ENCODE measurements at regions of chr5 and their contacts with region 1.

Region 1: DNA sequence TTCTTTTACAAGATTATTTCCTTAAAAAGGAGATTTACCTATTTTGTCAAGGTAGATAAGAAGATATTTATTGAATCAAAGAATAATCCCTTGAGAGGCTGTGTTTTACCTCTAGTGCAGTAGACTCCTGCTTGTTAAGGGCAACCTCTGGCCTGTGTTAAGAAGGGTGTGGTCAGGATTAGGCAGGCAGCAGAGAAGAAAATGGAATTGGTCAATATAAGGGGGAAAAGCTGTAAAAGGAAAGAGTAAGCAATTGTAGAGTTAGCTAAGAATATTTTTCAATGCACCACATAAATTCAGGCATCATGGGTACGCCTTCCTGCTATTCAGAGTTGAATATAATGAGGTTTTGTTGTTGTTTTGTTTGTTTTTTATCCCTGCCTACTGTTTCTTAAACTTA is 6.2 kb downstream of the CCDC125 start:
- DNase-seq: no peak
- ATAC-seq: no peak
- H3K4me3 Mint-ChIP-seq: no peak overlapping the region
- H3K27ac Mint-ChIP-seq: peak overlapping the region in 2 of 10 donors; percentile 53 to 69
- H3K4me1 Mint-ChIP-seq: peaks cover 0 to 5% (median 2%) of the 10 kb centered on the region in 4 donors
- H3K27me3 Mint-ChIP-seq: no peaks in the 10 kb centered on the region

Region 2: DNA sequence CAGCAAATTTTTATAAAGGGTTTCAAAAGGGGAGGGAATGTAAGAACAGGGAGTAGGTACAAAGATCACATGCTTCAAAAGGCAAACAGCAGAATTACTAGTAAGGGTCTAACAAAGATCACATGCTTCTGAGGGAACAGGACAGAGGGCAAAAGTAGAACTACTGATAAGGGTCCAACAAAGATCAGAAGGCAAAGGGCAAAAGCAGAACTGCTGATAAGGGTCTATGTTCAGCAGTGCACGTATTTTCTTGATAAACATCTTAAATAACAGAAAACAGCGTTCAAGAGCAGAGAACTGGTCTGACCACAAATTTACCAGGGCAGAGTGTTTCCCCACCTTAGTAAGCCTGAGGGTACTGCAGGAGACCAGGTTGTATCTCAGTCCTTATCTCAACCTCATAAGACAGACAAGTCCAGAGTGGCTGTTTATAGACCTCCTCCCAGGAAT is 1580.2 kb before region 1 on chr5:
- POLR2A ChIA-PET with region 1: no interaction called
- DNase-seq: no peak
- ATAC-seq: no peak
- H3K4me3 Mint-ChIP-seq: no peak overlapping the region
- H3K27ac Mint-ChIP-seq: no peak overlapping the region
- H3K4me1 Mint-ChIP-seq: no peaks in the 10 kb centered on the region
- H3K27me3 Mint-ChIP-seq: no peaks in the 10 kb centered on the region

Region 3: DNA sequence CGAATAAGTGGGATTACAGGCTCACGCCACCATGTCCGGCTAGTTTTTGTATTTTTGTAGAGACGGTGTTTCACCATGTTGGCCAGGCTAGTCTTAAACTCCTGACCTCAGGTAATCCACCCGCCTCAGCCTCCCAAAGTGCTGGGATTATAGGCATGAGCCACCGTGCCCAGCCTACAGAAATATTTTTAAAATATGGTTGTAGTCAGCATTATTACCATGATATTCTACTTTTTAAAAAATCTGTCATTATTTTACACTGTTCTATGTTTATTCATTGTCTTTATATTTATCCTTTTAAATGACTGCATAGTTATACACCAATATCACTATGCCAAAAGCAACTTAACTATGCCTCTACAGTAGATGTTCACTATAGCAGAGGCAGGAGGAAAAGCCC is 274.2 kb before region 1 on chr5:
- POLR2A ChIA-PET with region 1: no interaction called
- DNase-seq: no peak
- ATAC-seq: no peak
- H3K4me3 Mint-ChIP-seq: no peak overlapping the region
- H3K27ac Mint-ChIP-seq: no peak overlapping the region
- H3K4me1 Mint-ChIP-seq: no peaks in the 10 kb centered on the region
- H3K27me3 Mint-ChIP-seq: peaks cover 0 to 2% (median 0%) of the 10 kb centered on the region in 5 donors

Region 4: GRCh38 chr5:69364850-69365249 is 38.5 kb after region 1 on chr5:
- POLR2A ChIA-PET with region 1: interaction called, 10 read pairs
- DNase-seq: no peak
- ATAC-seq: no peak
- H3K4me3 Mint-ChIP-seq: no peak overlapping the region
- H3K27ac Mint-ChIP-seq: peak overlapping the region in 2 of 10 donors; percentile 63 to 66
- H3K4me1 Mint-ChIP-seq: peaks cover 19 to 46% (median 34%) of the 10 kb centered on the region in 4 donors
- H3K27me3 Mint-ChIP-seq: no peaks in the 10 kb centered on the region

Measured in naive thymus-derived CD8-positive, alpha-beta T cell (primary cell).